ENCODE measurements at regions of chr2 and their contacts with region 1.

Region 1: DNA sequence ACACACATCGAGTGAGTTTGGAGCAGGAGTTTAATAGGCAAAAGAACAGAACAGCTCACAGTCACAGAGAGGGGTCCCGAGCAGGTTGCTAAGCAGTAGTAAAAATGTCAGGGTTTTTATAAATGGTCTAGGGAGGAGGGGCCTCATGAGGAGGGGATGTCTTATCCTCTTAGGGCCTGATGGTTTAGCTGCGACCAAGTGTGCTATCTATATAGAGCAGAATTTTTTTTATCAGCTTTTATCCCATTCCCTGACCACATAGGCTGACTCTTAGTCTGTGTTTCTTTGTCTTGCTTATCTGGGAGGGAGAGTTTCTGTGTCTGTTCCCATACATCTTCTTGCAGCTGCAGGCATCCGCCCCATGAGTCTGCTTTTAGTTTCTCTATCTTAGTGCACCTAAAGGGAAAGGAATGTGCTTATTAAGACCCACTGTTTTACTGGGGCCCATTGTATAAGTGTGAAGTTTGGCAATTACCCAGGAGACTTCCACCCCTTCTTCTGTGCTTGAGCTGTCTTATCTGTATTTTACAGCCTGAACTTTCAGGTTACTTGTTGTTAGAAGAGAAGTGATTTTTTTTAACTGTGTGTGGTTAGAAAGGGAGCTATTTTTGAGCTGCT is 30.4 kb upstream of the GMCL1 start:
- DNase-seq: peak; percentile 63 to 71
- H3K4me3 ChIP-seq: peak overlapping the region; percentile 33
- H3K4me3 Mint-ChIP-seq: peak overlapping the region; percentile 71
- H3K27ac Mint-ChIP-seq: peak overlapping the region; percentile 92
- H3K4me1 ChIP-seq: peaks cover 49% of the 10 kb centered on the region
- H3K4me1 Mint-ChIP-seq: peaks cover 60% of the 10 kb centered on the region
- H3K27me3 ChIP-seq: no peaks in the 10 kb centered on the region
- H3K27me3 Mint-ChIP-seq: no peaks in the 10 kb centered on the region
- CTCF ChIP-seq: no peak

Region 2: GRCh38 chr2:69741619-69742466 is 57.2 kb before region 1 on chr2 and contains the start of gene ANXA4:
- CTCF ChIA-PET with region 1: interaction called, 3 read pairs
- POLR2A ChIA-PET with region 1: interaction called, 3 read pairs
- intact Hi-C with region 1: loop called (anchors 1 kb)
- DNase-seq: peak; percentile 92 to 93
- H3K4me3 ChIP-seq: peak within 1 kb of the TSS; percentile 78
- H3K4me3 Mint-ChIP-seq: peak within 1 kb of the TSS; percentile 97
- H3K27ac Mint-ChIP-seq: peak within 1 kb of the TSS; percentile 96
- H3K4me1 ChIP-seq: peaks cover 20% of the 10 kb centered on the region
- H3K4me1 Mint-ChIP-seq: peaks cover 23% of the 10 kb centered on the region
- H3K27me3 ChIP-seq: no peaks in the 10 kb centered on the region
- H3K27me3 Mint-ChIP-seq: no peaks in the 10 kb centered on the region
- CTCF ChIP-seq: no peak
- total RNA-seq, gene ANXA4: 90.8 and 92.0 TPM in 2 replicates

Region 3: GRCh38 chr2:69781321-69782248 is 17.4 kb before region 1 on chr2:
- CTCF ChIA-PET with region 1: interaction called, 3 read pairs
- POLR2A ChIA-PET with region 1: no interaction called
- intact Hi-C with region 1: loop called (anchors 1 kb)
- DNase-seq: peak; percentile 67 to 79
- H3K4me3 ChIP-seq: no peak overlapping the region
- H3K4me3 Mint-ChIP-seq: no peak overlapping the region
- H3K27ac Mint-ChIP-seq: peak overlapping the region; percentile 16
- H3K4me1 ChIP-seq: peaks cover 62% of the 10 kb centered on the region
- H3K4me1 Mint-ChIP-seq: peaks cover 39% of the 10 kb centered on the region
- H3K27me3 ChIP-seq: no peaks in the 10 kb centered on the region
- H3K27me3 Mint-ChIP-seq: no peaks in the 10 kb centered on the region
- CTCF ChIP-seq: no peak

Region 4: GRCh38 chr2:70142590-70143313 is 343.7 kb after region 1 on chr2:
- CTCF ChIA-PET with region 1: no interaction called
- POLR2A ChIA-PET with region 1: no interaction called
- intact Hi-C with region 1: no loop called
- DNase-seq: peak; percentile 99 to 100
- H3K4me3 ChIP-seq: peak overlapping the region; percentile 64
- H3K4me3 Mint-ChIP-seq: peak overlapping the region; percentile 83
- H3K27ac Mint-ChIP-seq: peak overlapping the region; percentile 99
- H3K4me1 ChIP-seq: peaks cover 32% of the 10 kb centered on the region
- H3K4me1 Mint-ChIP-seq: peaks cover 21% of the 10 kb centered on the region
- H3K27me3 ChIP-seq: no peaks in the 10 kb centered on the region
- H3K27me3 Mint-ChIP-seq: no peaks in the 10 kb centered on the region
- CTCF ChIP-seq: peak; percentile 94 to 95